Activated CD4-positive, alpha-beta T cell treated with anti-CD3 and anti-CD28 coated beads for 36 hours (primary cell): ENCODE measurements at regions of chr1 and their contacts with region 1.

Region 1: GRCh38 chr1:13748610-13749505 is 48.9 kb downstream of the PRDM2 start:
- DNase-seq: peak; percentile 97
- ATAC-seq: peak; percentile 93
- H3K4me3 Mint-ChIP-seq: peak overlapping the region; percentile 97
- H3K27ac Mint-ChIP-seq: peak overlapping the region; percentile 90
- H3K4me1 Mint-ChIP-seq: peaks cover 45% of the 10 kb centered on the region
- H3K27me3 Mint-ChIP-seq: no peaks in the 10 kb centered on the region

Region 2: DNA sequence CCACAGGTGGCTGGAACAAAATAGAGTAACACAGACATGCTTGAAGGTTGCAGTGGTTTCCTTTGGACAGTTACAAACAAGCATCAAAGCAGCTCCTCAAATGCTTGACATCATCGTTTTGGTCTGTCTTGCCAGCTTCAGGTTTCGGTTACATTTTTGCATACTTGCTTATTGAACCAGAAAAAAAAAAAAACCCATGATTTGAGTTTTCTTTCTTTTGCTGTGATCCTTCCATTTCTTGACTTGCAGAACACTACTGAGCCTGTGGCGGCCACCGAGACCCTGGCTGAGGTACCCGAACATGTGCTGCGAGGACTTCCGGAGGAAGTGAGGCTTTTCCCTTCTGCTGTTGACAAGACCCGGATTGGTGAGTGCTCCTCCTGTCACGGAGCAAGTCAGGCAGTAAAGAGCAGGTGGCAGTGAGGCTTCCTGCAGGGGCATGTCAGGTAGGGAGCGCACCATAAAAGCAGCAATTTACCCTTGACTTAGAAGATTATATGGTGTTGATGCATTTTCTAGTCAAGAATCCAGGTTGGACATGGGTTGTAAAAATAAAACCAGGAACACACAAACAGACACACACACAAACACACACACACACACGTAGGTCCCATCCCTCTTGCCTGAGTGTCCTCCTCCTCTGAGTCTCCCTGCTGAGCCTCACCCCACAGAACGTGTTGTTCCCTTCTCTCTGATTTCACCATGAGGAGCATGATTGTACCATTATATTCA is 17.9 kb before region 1 on chr1:
- CTCF ChIA-PET with region 1: interaction called, 5 read pairs
- POLR2A ChIA-PET with region 1: interaction called, 9 read pairs
- intact Hi-C with region 1: loop called (anchors 1 kb)
- DNase-seq: peak; percentile 90
- ATAC-seq: peak; percentile 97
- H3K4me3 Mint-ChIP-seq: peak overlapping the region; percentile 82
- H3K27ac Mint-ChIP-seq: peak overlapping the region; percentile 97
- H3K4me1 Mint-ChIP-seq: peaks cover 63% of the 10 kb centered on the region
- H3K27me3 Mint-ChIP-seq: no peaks in the 10 kb centered on the region

Region 3: GRCh38 chr1:13737398-13737797 is 11.5 kb before region 1 on chr1:
- CTCF ChIA-PET with region 1: interaction called, 5 read pairs
- POLR2A ChIA-PET with region 1: interaction called, 4 read pairs
- intact Hi-C with region 1: loop called in 1 of 2 experiments (anchors 1 kb)
- DNase-seq: no peak
- ATAC-seq: peak; percentile 79
- H3K4me3 Mint-ChIP-seq: no peak overlapping the region
- H3K27ac Mint-ChIP-seq: peak overlapping the region; percentile 17
- H3K4me1 Mint-ChIP-seq: peaks cover 52% of the 10 kb centered on the region
- H3K27me3 Mint-ChIP-seq: no peaks in the 10 kb centered on the region

Region 4: DNA sequence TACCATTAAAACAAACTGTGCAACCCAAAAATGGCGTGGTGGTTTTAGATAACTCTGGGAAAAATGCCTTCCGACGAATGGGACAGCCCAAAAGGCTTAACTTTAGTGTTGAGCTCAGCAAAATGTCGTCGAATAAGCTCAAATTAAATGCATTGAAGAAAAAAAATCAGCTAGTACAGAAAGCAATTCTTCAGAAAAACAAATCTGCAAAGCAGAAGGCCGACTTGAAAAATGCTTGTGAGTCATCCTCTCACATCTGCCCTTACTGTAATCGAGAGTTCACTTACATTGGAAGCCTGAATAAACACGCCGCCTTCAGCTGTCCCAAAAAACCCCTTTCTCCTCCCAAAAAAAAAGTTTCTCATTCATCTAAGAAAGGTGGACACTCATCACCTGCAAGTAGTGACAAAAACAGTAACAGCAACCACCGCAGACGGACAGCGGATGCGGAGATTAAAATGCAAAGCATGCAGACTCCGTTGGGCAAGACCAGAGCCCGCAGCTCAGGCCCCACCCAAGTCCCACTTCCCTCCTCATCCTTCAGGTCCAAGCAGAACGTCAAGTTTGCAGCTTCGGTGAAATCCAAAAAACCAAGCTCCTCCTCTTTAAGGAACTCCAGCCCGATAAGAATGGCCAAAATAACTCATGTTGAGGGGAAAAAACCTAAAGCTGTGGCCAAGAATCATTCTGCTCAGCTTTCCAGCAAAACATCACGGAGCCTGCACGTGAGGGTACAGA is 33.2 kb after region 1 on chr1:
- CTCF ChIA-PET with region 1: no interaction called
- POLR2A ChIA-PET with region 1: no interaction called
- intact Hi-C with region 1: no loop called
- DNase-seq: no peak
- ATAC-seq: peak; percentile 75
- H3K4me3 Mint-ChIP-seq: no peak overlapping the region
- H3K27ac Mint-ChIP-seq: peak overlapping the region; percentile 76
- H3K4me1 Mint-ChIP-seq: peaks cover 52% of the 10 kb centered on the region
- H3K27me3 Mint-ChIP-seq: no peaks in the 10 kb centered on the region

Region 5: GRCh38 chr1:13922466-13923110 is 173.7 kb after region 1 on chr1:
- CTCF ChIA-PET with region 1: no interaction called
- POLR2A ChIA-PET with region 1: no interaction called
- intact Hi-C with region 1: no loop called
- DNase-seq: no peak
- ATAC-seq: no peak
- H3K4me3 Mint-ChIP-seq: no peak overlapping the region
- H3K27ac Mint-ChIP-seq: no peak overlapping the region
- H3K4me1 Mint-ChIP-seq: no peaks in the 10 kb centered on the region
- H3K27me3 Mint-ChIP-seq: peaks cover 21% of the 10 kb centered on the region